Left ventricle myocardium inferior (tissue), 1 donor: ENCODE measurements at regions of chr9 and their contacts with region 1.

Region 1: GRCh38 chr9:19379697-19380046 is 364 bp downstream of the RPS6 start:
- DNase-seq: no peak
- H3K4me3 ChIP-seq: peak overlapping the region; percentile 77
- H3K27ac ChIP-seq: peak overlapping the region; percentile 95
- H3K4me1 ChIP-seq: peaks cover 42% of the 10 kb centered on the region
- H3K27me3 ChIP-seq: no peaks in the 10 kb centered on the region
- CTCF ChIP-seq: no peak

Region 2: GRCh38 chr9:19408693-19409400 is 29.2 kb after region 1 on chr9 and contains the start of gene ACER2:
- intact Hi-C with region 1: loop called (anchors 1 kb)
- DNase-seq: peak; percentile 96
- H3K4me3 ChIP-seq: peak within 1 kb of the TSS; percentile 98
- H3K27ac ChIP-seq: peak within 1 kb of the TSS; percentile 95
- H3K4me1 ChIP-seq: peaks cover 40% of the 10 kb centered on the region
- H3K27me3 ChIP-seq: no peaks in the 10 kb centered on the region
- CTCF ChIP-seq: peak; percentile 13
- total RNA-seq, gene ACER2: 3.8 TPM

Region 3: DNA sequence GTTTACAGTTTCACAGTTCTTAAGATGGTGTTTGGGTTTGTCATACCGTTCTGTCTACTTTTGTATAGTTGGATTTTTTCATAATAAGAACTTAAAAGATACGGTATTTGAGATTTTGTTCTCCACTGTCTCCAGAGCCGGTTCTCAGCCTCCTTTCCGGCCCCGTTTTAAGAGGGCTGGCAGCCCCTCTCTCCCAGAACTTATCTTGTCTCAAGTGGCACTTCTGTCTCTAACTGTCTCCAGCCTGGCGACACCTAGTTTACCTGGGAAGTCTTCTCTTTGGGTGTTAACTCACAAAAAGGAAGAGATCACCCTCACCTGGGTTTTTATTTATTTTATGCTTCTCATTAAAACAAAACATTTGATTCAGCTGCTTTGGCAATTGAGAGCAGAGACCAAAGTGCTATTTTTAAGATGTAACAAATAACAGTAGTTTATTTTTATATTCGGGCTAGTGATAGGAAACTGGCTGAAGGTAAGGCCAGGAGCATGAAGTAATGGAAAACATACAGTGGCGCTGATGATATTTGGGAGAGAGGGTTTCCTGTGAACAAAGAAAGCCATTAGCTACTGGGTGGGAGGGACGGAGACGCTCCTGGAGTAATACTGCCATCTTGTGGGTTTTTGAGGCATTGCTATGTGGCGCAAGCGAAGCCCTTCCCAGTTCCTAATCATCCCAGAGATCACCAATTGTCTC is 77.5 kb after region 1 on chr9:
- intact Hi-C with region 1: loop called (anchors 10 kb)
- DNase-seq: peak; percentile 35
- H3K4me3 ChIP-seq: peak overlapping the region; percentile 41
- H3K27ac ChIP-seq: peak overlapping the region; percentile 73
- H3K4me1 ChIP-seq: peaks cover 16% of the 10 kb centered on the region
- H3K27me3 ChIP-seq: no peaks in the 10 kb centered on the region
- CTCF ChIP-seq: peak; percentile 99